Activated naive CD4-positive, alpha-beta T cell treated with anti-CD3 and anti-CD28 coated beads, Interleukin-2, amount 10 ng/mL, durations not matched to agents 7 days and 5 days (primary cell): ENCODE measurements at regions of chr6 and their contacts with region 1.

Region 1: GRCh38 chr6:137873273-137873762 is 6.3 kb downstream of the TNFAIP3 start:
- DNase-seq: peak; percentile 48
- H3K4me3 Mint-ChIP-seq: peak overlapping the region; percentile 1
- H3K27ac Mint-ChIP-seq: peak overlapping the region; percentile 76
- H3K4me1 Mint-ChIP-seq: peaks cover 75% of the 10 kb centered on the region
- H3K27me3 Mint-ChIP-seq: no peaks in the 10 kb centered on the region

Region 2: DNA sequence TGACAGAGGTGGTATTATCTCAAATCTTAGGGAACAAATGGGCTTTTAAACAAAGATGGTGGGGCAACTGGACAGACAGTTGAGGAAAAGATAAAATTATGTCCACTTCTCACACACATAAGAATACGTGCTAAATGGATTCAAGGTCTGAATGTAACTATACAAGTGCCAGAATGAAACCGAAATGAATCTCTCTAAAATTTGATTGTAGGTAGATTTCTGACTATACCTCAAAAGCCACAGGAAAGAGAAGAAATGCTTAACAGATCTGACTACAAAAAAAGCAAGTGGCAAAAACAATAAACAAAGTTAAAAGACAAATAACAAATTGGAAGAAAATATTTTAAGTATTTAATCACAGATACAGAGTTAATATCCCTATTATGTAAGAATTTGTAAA is 196.4 kb before region 1 on chr6:
- CTCF ChIA-PET with region 1: no interaction called
- DNase-seq: no peak
- H3K4me3 Mint-ChIP-seq: peak overlapping the region; percentile 7
- H3K27ac Mint-ChIP-seq: peak overlapping the region; percentile 77
- H3K4me1 Mint-ChIP-seq: peaks cover 44% of the 10 kb centered on the region
- H3K27me3 Mint-ChIP-seq: peaks cover 6% of the 10 kb centered on the region

Region 3: DNA sequence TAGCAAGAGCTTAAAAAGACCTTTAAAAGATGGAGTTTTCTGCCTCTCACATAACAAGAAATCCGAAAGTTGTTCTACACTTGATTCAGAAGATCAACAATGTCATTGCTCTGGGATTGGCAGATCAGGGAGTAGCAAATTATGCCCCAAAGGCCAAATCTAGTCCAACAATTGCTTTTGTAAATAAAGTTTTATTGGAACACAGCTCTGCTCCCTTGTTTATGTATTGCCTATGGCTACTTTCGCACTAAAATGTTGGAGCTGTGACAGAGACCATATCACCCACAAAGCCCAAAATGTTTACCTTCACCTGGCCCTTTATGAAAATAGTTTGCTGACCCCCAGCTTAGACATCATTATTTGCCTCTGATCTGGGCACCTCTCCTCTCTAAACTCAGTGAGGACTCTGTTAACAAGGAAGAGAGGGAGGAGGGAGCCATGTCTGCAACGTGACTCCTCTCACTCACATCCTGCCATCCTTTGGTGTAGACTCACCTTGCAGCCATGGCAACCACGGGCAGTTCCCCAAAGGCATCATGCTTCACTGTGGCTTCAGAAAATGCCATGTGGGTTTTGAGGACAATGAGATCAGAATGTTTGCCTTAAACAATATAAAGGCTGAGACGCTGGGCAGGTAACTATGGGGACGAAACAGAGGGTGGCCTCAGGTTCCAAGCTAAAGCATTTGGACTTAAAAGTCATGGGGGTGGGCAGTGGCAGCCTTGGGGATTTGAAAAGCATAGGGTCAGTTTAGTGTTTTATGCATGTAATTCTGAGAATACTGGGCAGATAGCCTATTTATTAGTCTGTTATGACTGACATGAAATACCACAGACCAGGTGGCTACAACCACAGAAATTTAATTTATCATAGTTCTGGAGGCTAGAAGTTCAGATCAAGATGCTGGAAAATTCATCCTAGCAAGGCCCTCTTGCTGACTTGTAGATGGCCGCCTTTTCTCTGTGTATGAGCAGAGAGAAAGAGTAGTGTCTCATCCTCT is 155.9 kb before region 1 on chr6:
- CTCF ChIA-PET with region 1: interaction called, 71 read pairs
- DNase-seq: peak; percentile 84
- H3K4me3 Mint-ChIP-seq: no peak overlapping the region
- H3K27ac Mint-ChIP-seq: peak overlapping the region; percentile 78
- H3K4me1 Mint-ChIP-seq: peaks cover 55% of the 10 kb centered on the region
- H3K27me3 Mint-ChIP-seq: no peaks in the 10 kb centered on the region

Region 4: DNA sequence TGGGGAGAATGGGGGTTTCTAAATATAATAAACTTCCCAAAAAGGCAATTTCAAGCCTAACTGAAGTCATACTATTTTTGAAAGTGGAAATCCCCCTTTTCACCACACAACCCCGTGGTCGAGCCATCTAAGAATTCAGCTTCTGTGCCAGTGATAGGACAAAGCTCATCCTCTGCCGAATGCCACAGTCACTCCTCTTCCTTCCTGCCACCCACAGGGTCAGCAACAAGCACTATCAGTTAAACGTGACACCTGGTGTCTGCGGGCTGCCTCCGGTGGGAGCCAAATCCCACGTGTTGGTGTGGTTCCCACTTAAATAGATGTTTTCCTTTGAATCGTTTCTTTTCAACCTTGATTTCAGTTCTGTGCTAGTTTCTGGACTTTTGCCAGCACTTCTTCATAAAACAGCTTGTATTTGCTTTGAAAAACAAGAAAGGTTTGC is 54.5 kb after region 1 on chr6:
- CTCF ChIA-PET with region 1: interaction called, 18 read pairs
- DNase-seq: peak; percentile 81
- H3K4me3 Mint-ChIP-seq: peak overlapping the region; percentile 42
- H3K27ac Mint-ChIP-seq: peak overlapping the region; percentile 83
- H3K4me1 Mint-ChIP-seq: peaks cover 37% of the 10 kb centered on the region
- H3K27me3 Mint-ChIP-seq: no peaks in the 10 kb centered on the region

Region 5: GRCh38 chr6:137975188-137975940 is 102.0 kb after region 1 on chr6:
- CTCF ChIA-PET with region 1: interaction called, 41 read pairs
- DNase-seq: peak; percentile 29
- H3K4me3 Mint-ChIP-seq: peak overlapping the region; percentile 67
- H3K27ac Mint-ChIP-seq: peak overlapping the region; percentile 95
- H3K4me1 Mint-ChIP-seq: peaks cover 40% of the 10 kb centered on the region
- H3K27me3 Mint-ChIP-seq: no peaks in the 10 kb centered on the region